ENCODE measurements at regions of chr6 and their contacts with region 1.

Region 1: GRCh38 chr6:125995972-125996580 is 9.7 kb downstream of the TRMT11 start:
- DNase-seq: peak; percentile 71
- ATAC-seq: peak; percentile 89
- H3K4me3 ChIP-seq: no peak overlapping the region
- H3K27ac ChIP-seq: no peak overlapping the region
- H3K4me1 ChIP-seq: peaks cover 3% of the 10 kb centered on the region; the same call in 1 of the 2 replicates
- H3K27me3 ChIP-seq: no peaks in the 10 kb centered on the region
- CTCF ChIP-seq: peak; percentile 90

Region 2: DNA sequence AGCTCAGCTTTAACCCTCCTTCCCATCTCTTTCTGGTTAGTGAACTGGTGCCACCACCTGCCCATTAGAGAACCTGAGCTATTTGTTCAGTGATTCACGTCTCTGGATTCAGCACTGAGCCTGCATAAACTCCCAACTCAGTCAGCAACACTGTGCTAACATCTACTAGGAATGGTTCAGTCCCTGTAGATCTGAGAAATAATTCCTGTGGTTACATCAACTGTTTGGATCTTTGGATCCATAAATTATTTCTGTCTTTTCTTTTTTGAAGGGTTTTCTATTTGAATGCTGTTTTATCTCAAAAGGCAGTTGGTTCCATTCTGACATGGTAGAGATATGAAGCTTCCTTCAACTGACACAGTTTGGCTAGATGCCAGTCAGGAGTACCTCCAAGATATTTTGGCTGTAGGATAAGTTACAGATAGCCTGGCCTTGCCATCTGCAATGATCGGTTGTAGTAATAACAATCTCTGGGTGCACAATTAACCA is 116.1 kb after region 1 on chr6:
- CTCF ChIA-PET with region 1: no interaction called
- POLR2A ChIA-PET with region 1: no interaction called
- intact Hi-C with region 1: loop called (anchors 2 kb)
- DNase-seq: peak; percentile 83
- ATAC-seq: peak; percentile 100
- H3K4me3 ChIP-seq: no peak overlapping the region
- H3K27ac ChIP-seq: no peak overlapping the region
- H3K4me1 ChIP-seq: peaks cover 14% of the 10 kb centered on the region
- H3K27me3 ChIP-seq: no peaks in the 10 kb centered on the region
- CTCF ChIP-seq: peak; percentile 33; the same call in 1 of the 2 replicates

Region 3: GRCh38 chr6:126170978-126171382 is 174.9 kb after region 1 on chr6:
- CTCF ChIA-PET with region 1: no interaction called
- POLR2A ChIA-PET with region 1: no interaction called
- intact Hi-C with region 1: loop called (anchors 1 kb)
- DNase-seq: peak; percentile 59
- ATAC-seq: peak; percentile 60
- H3K4me3 ChIP-seq: no peak overlapping the region
- H3K27ac ChIP-seq: no peak overlapping the region
- H3K4me1 ChIP-seq: peaks cover 5% of the 10 kb centered on the region
- H3K27me3 ChIP-seq: no peaks in the 10 kb centered on the region
- CTCF ChIP-seq: peak; percentile 69

Measured in PC-3 (cell line).